ENCODE measurements at regions of chr18 and their contacts with region 1.

Region 1: GRCh38 chr18:26480897-26481895 is 67.2 kb downstream of the KCTD1 start:
- DNase-seq: peak; percentile 61 to 96
- H3K4me3 ChIP-seq: peak overlapping the region; percentile 36; the same call in 1 of the 2 replicates
- H3K27ac ChIP-seq: peak overlapping the region; percentile 99
- H3K4me1 ChIP-seq: peaks cover 97% of the 10 kb centered on the region
- H3K27me3 ChIP-seq: no peaks in the 10 kb centered on the region
- CTCF ChIP-seq: no peak

Region 2: DNA sequence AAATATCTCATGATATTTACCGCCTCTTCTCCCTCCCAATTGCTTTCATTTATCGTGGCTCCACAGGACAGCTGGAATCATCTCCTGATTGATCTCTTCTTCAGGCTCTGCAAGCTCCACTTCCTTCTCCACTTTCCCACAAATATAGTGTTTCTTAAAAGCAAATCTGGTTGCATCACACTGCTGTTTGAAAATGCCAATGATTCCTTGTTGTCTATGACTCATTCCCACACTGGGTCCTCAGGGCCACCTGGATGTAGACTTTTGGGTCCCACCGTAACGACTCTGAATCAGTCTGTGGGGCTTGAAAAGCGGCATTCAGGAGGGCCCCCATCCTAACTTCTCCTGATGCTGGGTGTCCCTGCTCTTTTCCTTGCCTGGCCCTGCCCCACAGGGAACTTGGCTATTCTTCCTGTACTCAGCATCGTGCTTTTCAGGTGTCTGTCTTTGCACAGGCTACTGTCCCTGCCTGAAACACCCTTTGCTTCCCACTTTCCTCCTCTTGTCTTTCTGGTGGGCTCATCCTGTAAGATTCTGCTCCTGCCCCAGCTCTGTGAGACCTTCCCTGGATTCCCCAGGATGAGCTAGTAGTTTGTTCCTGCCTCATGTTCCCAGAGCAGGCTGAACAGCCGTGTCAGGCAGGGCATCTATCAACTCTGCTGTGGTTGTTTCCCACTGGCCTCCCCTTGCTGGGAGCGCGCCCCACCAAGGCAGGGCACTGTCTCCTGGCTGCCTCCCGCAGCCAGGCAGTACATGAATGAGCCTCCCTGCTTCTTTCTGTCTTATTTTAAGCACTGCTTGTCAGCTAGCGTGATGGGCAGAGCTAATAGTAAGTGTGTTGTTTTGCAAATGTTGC is 44.8 kb before region 1 on chr18:
- CTCF ChIA-PET with region 1: no interaction called
- POLR2A ChIA-PET with region 1: no interaction called
- intact Hi-C with region 1: loop called (anchors 2 kb)
- DNase-seq: peak; percentile 32 to 95
- H3K4me3 ChIP-seq: peak overlapping the region; percentile 37; the same call in 1 of the 2 replicates
- H3K27ac ChIP-seq: peak overlapping the region; percentile 85
- H3K4me1 ChIP-seq: peaks cover 26% of the 10 kb centered on the region
- H3K27me3 ChIP-seq: no peaks in the 10 kb centered on the region
- CTCF ChIP-seq: no peak

Region 3: DNA sequence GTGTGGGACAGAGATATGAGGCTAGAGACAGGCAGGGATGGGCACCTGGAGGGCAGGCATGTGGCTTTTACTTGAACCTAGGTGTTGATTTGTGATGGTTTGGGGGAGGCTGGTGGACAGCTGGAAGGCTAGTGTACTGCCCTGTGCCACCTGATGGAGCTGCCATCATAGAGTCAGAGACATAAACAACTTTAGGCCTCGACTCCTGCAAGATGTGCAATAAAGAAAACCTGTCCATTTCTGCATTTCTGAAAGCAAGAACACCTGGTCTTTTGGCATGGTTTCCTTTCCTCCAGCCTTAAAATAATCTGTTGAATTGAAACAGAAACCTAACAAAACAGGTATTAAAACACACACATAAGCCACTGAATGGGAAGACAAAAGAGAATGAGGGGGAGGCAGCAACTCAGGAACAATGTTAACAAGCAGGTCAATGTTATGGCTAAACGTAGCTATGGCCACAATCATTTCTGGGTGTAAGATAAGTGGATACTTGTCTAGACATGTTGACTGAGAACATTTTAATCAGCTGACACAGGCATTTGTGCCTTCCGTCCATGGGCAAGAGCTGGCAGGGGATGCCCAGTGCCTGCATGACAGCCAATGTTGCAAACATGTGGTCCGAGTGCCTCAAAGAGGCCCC is 20.6 kb before region 1 on chr18:
- CTCF ChIA-PET with region 1: no interaction called
- POLR2A ChIA-PET with region 1: no interaction called
- intact Hi-C with region 1: no loop called
- DNase-seq: no peak
- H3K4me3 ChIP-seq: no peak overlapping the region
- H3K27ac ChIP-seq: no peak overlapping the region
- H3K4me1 ChIP-seq: no peaks in the 10 kb centered on the region; the same call in 1 of the 2 replicates
- H3K27me3 ChIP-seq: no peaks in the 10 kb centered on the region
- CTCF ChIP-seq: no peak

Region 4: DNA sequence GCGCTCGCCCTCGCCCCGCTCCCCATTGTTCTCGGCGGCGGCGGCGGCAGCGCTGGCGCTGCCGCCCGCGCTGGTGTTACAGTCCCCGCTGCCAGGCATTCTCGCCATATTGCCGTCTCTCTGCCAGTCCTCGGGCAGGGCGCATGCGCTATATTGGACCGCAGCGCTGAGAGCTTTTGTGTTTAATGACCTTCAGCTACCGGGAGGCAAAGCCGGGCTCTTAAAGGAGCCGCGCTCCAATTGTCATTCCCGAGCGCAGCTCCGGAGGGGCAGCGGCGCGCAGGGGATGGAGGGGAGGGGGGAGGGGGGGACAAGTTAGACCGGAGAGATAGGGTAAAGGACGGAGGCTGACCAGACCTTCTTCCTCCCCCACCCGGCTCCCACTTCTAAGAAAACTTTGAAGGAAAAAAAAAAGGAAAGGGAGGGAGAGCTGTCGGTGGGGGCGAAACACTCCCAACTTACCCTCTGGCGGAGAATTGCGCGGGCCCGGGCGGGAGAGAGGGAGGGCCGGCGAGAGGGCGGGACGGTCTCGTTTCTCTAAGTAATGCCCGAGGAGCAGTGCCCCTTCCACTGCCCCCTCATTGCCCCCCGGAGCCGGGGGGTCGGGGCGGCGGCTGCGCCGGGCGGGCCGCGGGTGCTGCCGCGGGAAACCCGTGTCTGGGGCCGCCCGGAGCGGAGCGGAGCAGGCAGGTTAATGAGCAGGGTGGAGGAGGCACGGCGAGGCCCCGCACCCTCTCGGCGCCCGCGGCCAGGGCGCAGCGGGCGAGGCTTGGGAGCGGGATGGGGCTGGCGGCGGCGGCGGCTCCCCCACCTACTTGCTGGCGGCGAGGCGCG is 67.5 kb after region 1 on chr18 and contains the start of gene KCTD1:
- CTCF ChIA-PET with region 1: no interaction called
- POLR2A ChIA-PET with region 1: interaction called, 4 read pairs
- intact Hi-C with region 1: loop called (anchors 2 kb)
- DNase-seq: peak; percentile 57 to 58
- H3K4me3 ChIP-seq: peak within 1 kb of the TSS; percentile 78
- H3K27ac ChIP-seq: peak within 1 kb of the TSS; percentile 75
- H3K4me1 ChIP-seq: peaks cover 31% of the 10 kb centered on the region
- H3K27me3 ChIP-seq: no peaks in the 10 kb centered on the region
- CTCF ChIP-seq: no peak
- total RNA-seq, gene KCTD1: 20.5 and 20.7 TPM in 2 replicates

Region 5: GRCh38 chr18:26617151-26617554 is 136.0 kb after region 1 on chr18:
- CTCF ChIA-PET with region 1: interaction called, 3 read pairs
- POLR2A ChIA-PET with region 1: no interaction called
- intact Hi-C with region 1: loop called (anchors 1 kb)
- DNase-seq: peak; percentile 20 to 92
- H3K4me3 ChIP-seq: no peak overlapping the region
- H3K27ac ChIP-seq: peak overlapping the region; percentile 54
- H3K4me1 ChIP-seq: peaks cover 21% of the 10 kb centered on the region
- H3K27me3 ChIP-seq: no peaks in the 10 kb centered on the region
- CTCF ChIP-seq: no peak